Left ventricle myocardium inferior (tissue), 1 donor: ENCODE measurements at regions of chr17 and their contacts with region 1.

Region 1: GRCh38 chr17:10875979-10876555 is 38.2 kb upstream of the PIRT start:
- DNase-seq: no peak
- H3K4me3 ChIP-seq: no peak overlapping the region
- H3K27ac ChIP-seq: no peak overlapping the region
- H3K4me1 ChIP-seq: no peaks in the 10 kb centered on the region
- H3K27me3 ChIP-seq: peaks cover 82% of the 10 kb centered on the region
- CTCF ChIP-seq: peak; percentile 72

Region 2: GRCh38 chr17:10968007-10968406 is 91.9 kb after region 1 on chr17:
- intact Hi-C with region 1: no loop called
- DNase-seq: no peak
- H3K4me3 ChIP-seq: no peak overlapping the region
- H3K27ac ChIP-seq: no peak overlapping the region
- H3K4me1 ChIP-seq: no peaks in the 10 kb centered on the region
- H3K27me3 ChIP-seq: no peaks in the 10 kb centered on the region
- CTCF ChIP-seq: no peak

Region 3: DNA sequence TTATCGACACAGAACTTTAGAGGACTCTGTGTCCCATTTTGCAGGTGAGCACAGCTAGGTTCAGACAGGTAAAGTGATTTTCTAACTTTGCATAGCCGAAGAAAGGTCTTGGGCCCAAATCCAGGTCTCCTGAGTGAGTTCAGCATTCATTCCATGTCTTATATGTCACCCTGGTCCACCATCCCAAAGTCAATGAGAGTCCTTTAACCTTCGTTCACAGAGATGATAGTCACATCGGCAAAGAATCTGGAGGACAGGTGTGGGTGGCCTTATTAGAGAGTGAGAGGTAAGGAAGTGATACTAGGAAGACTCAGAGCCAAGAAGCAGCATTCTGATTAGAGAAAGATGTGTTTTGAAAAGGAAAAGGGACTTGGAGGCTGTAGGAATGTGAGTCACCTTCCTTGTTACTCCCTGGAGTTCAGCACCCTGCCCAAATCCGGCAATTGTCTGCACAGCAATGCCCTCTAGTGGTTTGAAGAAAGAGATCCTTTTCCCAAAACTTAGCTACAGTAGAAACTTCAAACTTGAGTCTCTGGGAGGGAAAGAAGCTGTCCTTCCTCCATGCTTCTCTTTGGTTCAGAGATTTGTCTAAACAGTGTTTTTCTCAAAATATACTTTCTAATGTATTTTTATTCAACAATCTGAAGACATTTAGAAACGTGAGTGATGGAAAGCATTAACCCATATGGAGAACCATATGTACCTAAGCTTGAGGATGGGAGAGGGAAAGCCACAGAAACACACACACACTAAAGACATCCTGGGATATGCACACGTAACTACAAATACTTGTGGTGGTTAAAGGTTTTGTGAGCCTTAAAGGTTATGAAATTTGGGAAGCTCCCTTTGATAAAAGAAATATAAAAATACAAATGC is 268.5 kb after region 1 on chr17:
- intact Hi-C with region 1: loop called (anchors 5 kb)
- DNase-seq: no peak
- H3K4me3 ChIP-seq: no peak overlapping the region
- H3K27ac ChIP-seq: no peak overlapping the region
- H3K4me1 ChIP-seq: no peaks in the 10 kb centered on the region
- H3K27me3 ChIP-seq: peaks cover 9% of the 10 kb centered on the region
- CTCF ChIP-seq: peak; percentile 73

Region 4: DNA sequence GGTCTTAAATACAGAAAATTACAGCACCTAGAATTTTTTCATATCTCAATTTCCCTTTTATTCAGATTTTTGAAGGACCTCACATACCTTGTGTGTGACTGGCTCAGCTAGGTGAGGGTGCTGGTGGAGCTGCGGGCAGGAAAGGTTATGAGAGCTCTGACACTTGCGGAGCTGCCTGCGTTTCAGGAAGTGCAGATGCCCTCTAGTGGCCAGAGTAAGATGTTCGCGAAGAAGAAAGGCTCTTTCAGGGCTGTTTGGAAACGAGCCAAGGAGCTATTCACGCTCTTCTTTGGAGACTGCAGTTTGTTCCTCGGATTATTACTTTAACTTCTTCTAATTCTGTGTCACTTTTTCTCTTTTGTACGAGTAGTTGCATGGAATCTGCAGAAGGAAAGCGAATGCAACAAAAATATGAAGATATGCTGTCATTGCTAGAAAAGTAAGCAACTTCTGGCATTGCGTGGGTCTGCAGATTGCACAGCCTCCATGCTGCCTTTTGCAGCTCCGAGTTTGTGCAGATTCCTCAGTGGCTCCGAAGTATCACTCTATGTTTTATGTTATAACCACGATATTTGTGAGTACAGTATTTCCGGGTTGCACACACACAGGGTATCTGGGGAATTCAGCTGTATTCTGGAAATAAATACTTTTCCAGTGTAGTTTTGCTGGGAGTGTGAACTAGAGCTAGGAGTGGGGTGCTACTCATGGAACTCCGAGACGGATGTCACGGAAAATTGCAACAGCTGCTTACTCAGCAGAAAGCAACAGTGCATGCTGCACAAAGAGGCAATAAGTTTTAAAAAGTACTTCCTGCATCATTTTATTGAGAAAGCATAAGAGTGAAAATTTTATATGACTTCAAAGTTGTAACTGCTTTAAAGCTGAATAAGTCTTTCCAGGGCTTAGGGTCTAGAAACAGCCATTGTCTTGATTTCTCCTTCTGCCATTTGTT is 768.5 kb after region 1 on chr17:
- intact Hi-C with region 1: loop called (anchors 10 kb)
- DNase-seq: peak; percentile 29
- H3K4me3 ChIP-seq: no peak overlapping the region
- H3K27ac ChIP-seq: no peak overlapping the region
- H3K4me1 ChIP-seq: peaks cover 5% of the 10 kb centered on the region
- H3K27me3 ChIP-seq: peaks cover 15% of the 10 kb centered on the region
- CTCF ChIP-seq: peak; percentile 85